WTC11 (cell line): ENCODE measurements at regions of chr4 and their contacts with region 1.

Region 1: GRCh38 chr4:6681187-6681586 is 12.5 kb upstream of the S100P start:
- DNase-seq: peak; percentile 49
- ATAC-seq: peak; percentile 36
- H3K4me3 Mint-ChIP-seq: no peak overlapping the region
- H3K27ac Mint-ChIP-seq: no peak overlapping the region
- H3K4me1 Mint-ChIP-seq: peaks cover 11% of the 10 kb centered on the region
- H3K27me3 Mint-ChIP-seq: no peaks in the 10 kb centered on the region
- CTCF ChIP-seq: no peak; the same call in 1 of the 2 replicates

Region 2: DNA sequence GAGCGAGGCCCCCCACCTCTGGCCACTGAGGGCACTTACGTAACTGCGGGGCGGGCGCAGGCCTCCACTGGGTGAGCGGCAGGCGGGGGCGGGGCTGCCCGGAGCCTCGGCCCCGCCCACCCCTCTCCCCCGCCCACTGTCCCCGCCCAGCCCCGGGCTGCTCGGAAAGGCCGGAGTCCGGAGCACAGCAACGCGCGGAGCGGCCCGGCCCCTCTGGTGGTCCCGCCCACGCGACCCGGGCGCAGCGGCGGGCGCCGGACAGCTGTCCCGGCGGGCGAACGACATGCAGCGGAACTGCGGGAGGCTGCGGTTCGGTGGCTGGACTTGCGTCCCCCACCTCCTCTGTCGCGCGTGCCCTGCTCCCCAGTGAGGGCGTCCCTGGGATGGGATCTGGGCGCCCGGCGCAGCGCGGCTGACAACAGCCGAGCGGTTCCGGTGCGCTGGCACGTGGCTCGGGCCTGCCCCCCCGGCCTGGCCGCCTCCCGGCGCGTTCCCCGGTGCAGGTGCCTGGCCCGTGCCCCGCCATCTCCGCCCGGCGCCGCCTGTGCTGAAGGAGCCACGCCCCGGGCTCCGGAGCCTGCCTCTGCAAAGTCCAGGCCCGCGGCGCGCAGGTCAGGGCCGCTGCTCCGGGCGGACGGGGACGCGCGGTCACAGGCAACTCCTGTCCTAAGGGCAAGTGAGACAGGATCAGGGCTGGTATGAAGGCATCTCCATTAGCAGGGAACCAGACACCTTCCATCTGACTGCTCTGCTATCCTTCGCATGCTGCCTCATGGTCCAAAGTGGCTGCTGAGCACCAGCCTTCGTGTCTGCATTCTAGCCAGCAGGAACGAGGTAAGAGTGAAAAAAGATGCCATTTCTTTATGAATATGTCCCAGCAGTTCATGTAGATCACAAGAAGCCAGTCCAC is 459.1 kb before region 1 on chr4:
- CTCF ChIA-PET with region 1: no interaction called
- POLR2A ChIA-PET with region 1: no interaction called
- DNase-seq: peak; percentile 80
- ATAC-seq: peak; percentile 83
- H3K4me3 Mint-ChIP-seq: peak overlapping the region; percentile 85
- H3K27ac Mint-ChIP-seq: no peak overlapping the region
- H3K4me1 Mint-ChIP-seq: peaks cover 2% of the 10 kb centered on the region; the same call in 1 of the 2 replicates
- H3K27me3 Mint-ChIP-seq: peaks cover 45% of the 10 kb centered on the region
- CTCF ChIP-seq: no peak

Region 3: DNA sequence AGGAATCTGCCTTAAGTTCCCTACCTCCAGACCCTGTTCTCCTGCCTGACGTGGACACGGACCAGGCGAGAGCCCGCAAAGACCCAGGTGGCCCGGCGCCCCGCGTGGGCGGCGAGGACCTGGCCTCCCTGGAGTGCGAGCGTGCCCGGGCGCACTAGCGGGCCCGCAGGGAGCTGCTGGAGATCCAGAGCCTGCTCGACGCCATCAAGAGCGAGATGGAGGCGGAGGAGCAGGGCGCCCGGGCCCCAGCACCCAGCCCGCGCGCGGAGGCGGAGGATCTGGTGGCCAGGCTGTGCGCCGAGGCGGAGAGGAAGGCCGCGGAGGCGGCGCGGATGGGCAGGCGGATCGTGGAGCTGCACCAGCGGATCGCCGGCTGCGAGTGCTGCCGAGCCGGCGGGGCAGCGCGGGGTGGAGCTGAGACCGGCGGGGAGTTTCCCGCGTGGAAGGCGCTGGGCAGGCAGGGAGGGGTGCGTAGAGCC is 22.6 kb before region 1 on chr4:
- CTCF ChIA-PET with region 1: interaction called, 56 read pairs
- POLR2A ChIA-PET with region 1: no interaction called
- DNase-seq: peak; percentile 60
- ATAC-seq: peak; percentile 78
- H3K4me3 Mint-ChIP-seq: peak overlapping the region; percentile 41
- H3K27ac Mint-ChIP-seq: no peak overlapping the region
- H3K4me1 Mint-ChIP-seq: peaks cover 2% of the 10 kb centered on the region; the same call in 1 of the 2 replicates
- H3K27me3 Mint-ChIP-seq: peaks cover 62% of the 10 kb centered on the region
- CTCF ChIP-seq: no peak

Region 4: DNA sequence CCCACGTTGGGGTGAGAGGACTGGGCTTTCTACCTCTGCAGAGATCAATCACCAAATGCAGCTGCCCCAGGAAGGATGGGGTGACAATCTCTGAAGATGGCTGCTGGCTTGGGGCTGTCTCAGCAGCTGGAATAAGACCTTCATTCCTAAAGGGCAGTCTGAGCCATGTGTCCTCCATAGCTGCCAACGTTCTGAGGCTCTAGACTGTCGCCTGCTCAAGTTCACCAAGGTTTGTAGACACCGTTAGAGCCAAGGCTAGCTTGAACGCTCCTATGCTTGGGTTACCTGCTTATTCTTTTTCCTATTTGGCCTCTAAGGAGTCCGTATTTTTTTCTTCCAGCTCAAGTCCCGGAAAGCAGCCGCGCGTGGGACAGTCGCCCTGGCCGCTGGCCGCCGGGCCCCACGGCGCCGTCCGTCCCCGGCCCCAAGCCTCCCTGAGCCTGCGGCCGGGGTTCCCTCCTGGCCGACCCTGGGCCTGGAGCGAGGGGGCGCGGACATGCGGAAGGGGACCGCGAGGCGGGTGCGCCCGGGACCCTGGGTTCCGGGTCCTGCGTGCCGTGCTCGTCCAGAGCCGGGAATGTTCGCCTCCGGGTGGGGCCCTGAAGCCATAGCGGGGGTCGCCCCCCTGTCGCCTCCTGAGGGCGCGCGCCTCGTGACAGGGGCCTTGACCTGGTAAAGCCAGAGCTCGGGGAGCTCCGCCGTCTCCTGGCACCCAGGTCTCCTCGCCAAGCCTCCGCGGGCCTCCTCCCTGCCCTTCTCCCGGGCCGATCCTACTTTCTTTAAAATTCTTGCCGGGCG is 17.4 kb before region 1 on chr4:
- CTCF ChIA-PET with region 1: interaction called, 56 read pairs
- POLR2A ChIA-PET with region 1: no interaction called
- DNase-seq: peak; percentile 34
- ATAC-seq: peak; percentile 49
- H3K4me3 Mint-ChIP-seq: peak overlapping the region; percentile 45
- H3K27ac Mint-ChIP-seq: no peak overlapping the region
- H3K4me1 Mint-ChIP-seq: no peaks in the 10 kb centered on the region
- H3K27me3 Mint-ChIP-seq: peaks cover 57% of the 10 kb centered on the region
- CTCF ChIP-seq: no peak